ENCODE measurements at regions of chr6 and their contacts with region 1.

Region 1: GRCh38 chr6:15911753-15912504 is 217.0 kb upstream of the MYLIP start:
- DNase-seq: peak; percentile 65
- H3K4me3 Mint-ChIP-seq: no peak overlapping the region
- H3K27ac Mint-ChIP-seq: peak overlapping the region; percentile 76
- H3K4me1 Mint-ChIP-seq: peaks cover 22% of the 10 kb centered on the region
- H3K27me3 Mint-ChIP-seq: no peaks in the 10 kb centered on the region

Region 2: GRCh38 chr6:15023448-15023847 is 888.5 kb before region 1 on chr6:
- intact Hi-C with region 1: no loop called
- DNase-seq: peak; percentile 79
- H3K4me3 Mint-ChIP-seq: peak overlapping the region; percentile 40
- H3K27ac Mint-ChIP-seq: peak overlapping the region; percentile 92
- H3K4me1 Mint-ChIP-seq: peaks cover 32% of the 10 kb centered on the region
- H3K27me3 Mint-ChIP-seq: no peaks in the 10 kb centered on the region

Region 3: GRCh38 chr6:15735567-15736265 is 176.2 kb before region 1 on chr6:
- intact Hi-C with region 1: loop called (anchors 5 kb)
- DNase-seq: peak; percentile 53
- H3K4me3 Mint-ChIP-seq: peak overlapping the region; percentile 68
- H3K27ac Mint-ChIP-seq: peak overlapping the region; percentile 81
- H3K4me1 Mint-ChIP-seq: peaks cover 35% of the 10 kb centered on the region
- H3K27me3 Mint-ChIP-seq: no peaks in the 10 kb centered on the region

Region 4: GRCh38 chr6:15776458-15776980 is 135.4 kb before region 1 on chr6:
- intact Hi-C with region 1: loop called (anchors 1 kb)
- DNase-seq: peak; percentile 67
- H3K4me3 Mint-ChIP-seq: peak overlapping the region; percentile 27
- H3K27ac Mint-ChIP-seq: peak overlapping the region; percentile 88
- H3K4me1 Mint-ChIP-seq: peaks cover 43% of the 10 kb centered on the region
- H3K27me3 Mint-ChIP-seq: no peaks in the 10 kb centered on the region

Region 5: DNA sequence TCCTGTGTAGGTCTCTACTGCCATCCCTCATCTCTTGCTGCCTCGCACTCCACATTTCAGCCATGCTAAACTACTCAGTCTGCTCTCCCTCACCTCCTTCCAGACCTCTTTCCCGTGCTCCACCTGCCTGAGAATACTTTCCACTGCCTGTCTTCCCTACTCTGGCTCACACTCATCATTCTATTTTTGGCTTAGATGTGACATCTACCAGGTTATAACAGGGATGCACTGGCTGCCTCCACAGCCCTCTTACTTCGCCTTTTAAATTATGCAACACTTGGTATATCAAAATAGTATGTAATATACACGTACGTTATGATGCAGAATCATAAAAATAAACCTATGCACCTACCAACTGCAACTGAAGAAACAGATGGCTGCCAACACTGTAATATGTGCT is 26.3 kb before region 1 on chr6:
- intact Hi-C with region 1: no loop called
- DNase-seq: no peak
- H3K4me3 Mint-ChIP-seq: no peak overlapping the region
- H3K27ac Mint-ChIP-seq: no peak overlapping the region
- H3K4me1 Mint-ChIP-seq: peaks cover 11% of the 10 kb centered on the region
- H3K27me3 Mint-ChIP-seq: no peaks in the 10 kb centered on the region

Region 6: DNA sequence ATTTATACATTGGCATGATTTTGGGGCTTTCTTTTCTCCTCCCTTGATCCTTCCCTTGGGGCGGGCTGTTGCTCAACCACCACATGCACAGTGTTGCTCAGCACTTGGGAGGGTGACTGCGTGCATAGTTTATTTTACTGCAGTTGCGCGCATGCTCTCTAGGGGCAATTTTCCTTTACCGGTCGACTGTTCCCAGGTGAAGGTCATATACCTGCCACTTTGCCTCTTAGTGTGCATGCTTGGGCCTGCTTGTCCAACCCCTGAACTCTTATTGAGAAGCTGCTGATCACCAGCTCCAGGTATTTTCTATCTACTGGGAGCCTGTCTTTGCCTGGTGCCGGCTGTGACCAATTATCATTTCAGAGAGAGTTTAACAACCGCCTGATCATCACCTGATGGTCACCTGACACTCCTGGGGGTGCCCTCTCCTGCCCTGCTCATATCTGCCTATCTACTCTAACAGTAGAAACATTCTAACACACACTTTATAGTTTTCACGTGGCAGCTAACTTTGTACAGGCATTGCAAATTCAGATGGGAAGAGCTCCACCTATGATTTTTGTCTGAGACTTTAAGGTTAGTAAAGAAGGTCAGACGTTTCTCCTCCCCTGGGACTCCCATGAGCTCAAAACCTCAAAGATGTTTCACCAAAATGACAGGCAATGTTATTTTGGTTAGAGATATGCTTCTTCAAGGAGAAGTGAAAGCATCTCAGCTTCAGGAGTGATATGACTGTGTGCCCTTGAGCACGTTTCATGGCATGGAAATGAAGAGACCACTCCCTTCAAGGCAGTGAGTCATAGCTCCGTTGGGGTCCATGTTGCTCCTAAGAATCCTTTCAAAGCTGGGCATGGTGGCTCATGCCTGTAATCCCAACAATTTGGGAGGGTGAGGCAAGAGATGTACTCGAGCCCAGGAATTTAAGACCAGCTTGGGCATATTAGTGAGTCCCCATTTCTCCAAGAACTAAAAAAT is 10.5 kb before region 1 on chr6:
- intact Hi-C with region 1: loop called (anchors 1 kb)
- DNase-seq: peak; percentile 82
- H3K4me3 Mint-ChIP-seq: peak overlapping the region; percentile 70
- H3K27ac Mint-ChIP-seq: peak overlapping the region; percentile 94
- H3K4me1 Mint-ChIP-seq: peaks cover 29% of the 10 kb centered on the region
- H3K27me3 Mint-ChIP-seq: no peaks in the 10 kb centered on the region

Region 7: GRCh38 chr6:15994814-15995459 is 83.0 kb after region 1 on chr6:
- intact Hi-C with region 1: loop called (anchors 5 kb)
- DNase-seq: peak; percentile 52
- H3K4me3 Mint-ChIP-seq: no peak overlapping the region
- H3K27ac Mint-ChIP-seq: peak overlapping the region; percentile 76
- H3K4me1 Mint-ChIP-seq: peaks cover 12% of the 10 kb centered on the region
- H3K27me3 Mint-ChIP-seq: peaks cover 2% of the 10 kb centered on the region

Region 8: GRCh38 chr6:16183187-16183664 is 271.3 kb after region 1 on chr6:
- intact Hi-C with region 1: loop called (anchors 1 kb)
- DNase-seq: peak; percentile 60
- H3K4me3 Mint-ChIP-seq: no peak overlapping the region
- H3K27ac Mint-ChIP-seq: no peak overlapping the region
- H3K4me1 Mint-ChIP-seq: peaks cover 21% of the 10 kb centered on the region
- H3K27me3 Mint-ChIP-seq: peaks cover 12% of the 10 kb centered on the region